H1 (cell line): ENCODE measurements at regions of chr22 and their contacts with region 1.

Region 1: GRCh38 chr22:33851240-33851639 is 69.0 kb downstream of the LARGE1 start:
- DNase-seq: no peak
- H3K4me3 ChIP-seq: peak overlapping the region in 1 of 4 experiments; percentile 48; a peak in 3 of 8 replicates
- H3K27ac ChIP-seq: peak overlapping the region; percentile 94
- H3K4me1 ChIP-seq: peaks cover 35 to 58% (median 48%) of the 10 kb centered on the region in 4 experiments
- H3K27me3 ChIP-seq: no peaks in the 10 kb centered on the region
- CTCF ChIP-seq: no peak
- EP300 ChIP-seq: no peak
- POLR2A ChIP-seq: no peak
- RAD21 ChIP-seq: no peak

Region 2: GRCh38 chr22:33579448-33580093 is 271.7 kb before region 1 on chr22:
- CTCF ChIA-PET with region 1: no interaction called
- POLR2A ChIA-PET with region 1: no interaction called
- DNase-seq: peak; percentile 53 to 94
- H3K4me3 ChIP-seq: no peak overlapping the region
- H3K27ac ChIP-seq: no peak overlapping the region
- H3K4me1 ChIP-seq: no peaks in the 10 kb centered on the region
- H3K27me3 ChIP-seq: no peaks in the 10 kb centered on the region
- CTCF ChIP-seq: peak; percentile 54 to 97 (median 94)
- EP300 ChIP-seq: no peak
- POLR2A ChIP-seq: no peak
- RAD21 ChIP-seq: peak; percentile 88 to 94

Region 3: GRCh38 chr22:33896575-33897447 is 45.6 kb after region 1 on chr22:
- CTCF ChIA-PET with region 1: interaction called, 3 read pairs
- POLR2A ChIA-PET with region 1: interaction called, 11 read pairs
- DNase-seq: peak in 1 of 2 experiments; percentile 56
- H3K4me3 ChIP-seq: peak overlapping the region in 3 of 4 experiments; percentile 16 to 40 (median 32); a peak in 6 of 8 replicates
- H3K27ac ChIP-seq: peak overlapping the region; percentile 79
- H3K4me1 ChIP-seq: peaks cover 39 to 85% (median 51%) of the 10 kb centered on the region in 4 experiments
- H3K27me3 ChIP-seq: no peaks in the 10 kb centered on the region
- CTCF ChIP-seq: no peak
- EP300 ChIP-seq: peak in 1 of 2 experiments; percentile 42; a peak in 1 of 3 replicates
- POLR2A ChIP-seq: peak in 1 of 2 experiments; percentile 45; a peak in 2 of 3 replicates
- RAD21 ChIP-seq: no peak; a peak in 2 of 4 replicates

Region 4: DNA sequence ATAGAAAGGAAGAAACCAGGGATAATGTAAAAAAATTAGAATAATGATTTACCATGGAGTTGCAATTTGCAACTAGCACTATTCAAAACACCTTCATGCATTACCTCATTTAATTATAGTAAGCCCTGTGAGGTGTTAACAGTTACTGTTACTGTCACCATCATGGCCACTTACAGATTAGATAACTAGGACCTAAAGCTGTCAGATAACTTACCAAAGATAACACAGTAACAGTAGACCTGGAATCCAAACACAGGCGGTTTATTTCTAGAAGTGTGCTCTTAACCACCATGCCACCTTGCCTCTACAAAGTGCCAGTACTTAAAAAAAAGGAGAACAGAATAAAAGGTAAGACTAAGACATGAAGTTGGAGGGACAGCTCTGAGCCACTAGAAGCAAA is 80.2 kb after region 1 on chr22:
- CTCF ChIA-PET with region 1: no interaction called
- POLR2A ChIA-PET with region 1: no interaction called
- DNase-seq: no peak
- H3K4me3 ChIP-seq: no peak overlapping the region
- H3K27ac ChIP-seq: no peak overlapping the region
- H3K4me1 ChIP-seq: no peaks in the 10 kb centered on the region
- H3K27me3 ChIP-seq: no peaks in the 10 kb centered on the region
- CTCF ChIP-seq: no peak
- EP300 ChIP-seq: no peak
- POLR2A ChIP-seq: no peak
- RAD21 ChIP-seq: no peak